Activated CD4-positive, alpha-beta T cell treated with anti-CD3 and anti-CD28 coated beads, Interleukin-2, amount 10 ng/mL, durations not matched to agents 24 days and 14 days (primary cell): ENCODE measurements at regions of chr13 and their contacts with region 1.

Region 1: DNA sequence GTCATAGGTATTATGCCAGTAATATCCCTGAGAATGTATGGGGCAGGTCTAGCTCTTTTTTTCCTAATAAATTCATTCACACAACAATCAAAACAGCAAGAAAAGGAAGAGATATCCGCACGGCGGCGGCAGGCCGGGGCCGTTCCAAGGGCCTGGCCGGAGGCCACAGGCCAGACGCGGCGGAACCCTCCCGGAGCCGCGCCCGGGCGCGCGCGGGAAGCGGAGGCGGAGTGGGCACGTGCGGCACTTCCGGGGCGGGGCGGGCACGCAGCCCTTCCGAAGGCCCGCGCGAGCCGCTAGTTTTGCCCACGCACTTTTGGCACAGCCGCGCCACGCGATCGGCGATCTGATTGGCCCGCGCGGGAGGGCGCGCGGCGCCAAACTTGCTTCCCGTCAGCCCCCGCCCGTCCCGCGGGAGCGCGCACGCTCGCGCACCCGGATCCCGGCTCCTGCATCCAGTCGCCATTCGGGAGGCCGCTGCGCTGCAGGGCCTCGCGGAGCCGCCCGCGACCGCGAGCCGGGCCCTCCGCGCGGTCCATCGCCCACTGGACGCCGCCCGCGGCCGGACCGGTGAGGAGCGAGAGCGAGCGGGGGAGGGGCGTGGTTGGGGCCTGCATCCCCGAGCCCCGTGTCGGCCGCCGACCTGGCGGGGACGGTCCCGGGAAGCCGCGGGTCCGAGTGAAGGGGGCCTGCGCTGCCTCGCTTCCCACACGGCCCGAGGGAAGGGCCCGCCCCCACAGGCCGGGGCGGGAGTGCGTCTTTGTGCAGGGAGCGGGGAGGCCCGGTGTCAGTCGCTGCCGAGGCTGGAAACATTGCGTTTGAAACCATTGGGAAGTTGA is at the start of gene CHAMP1:
- DNase-seq: peak; percentile 98
- H3K4me3 Mint-ChIP-seq: peak within 1 kb of the TSS; percentile 86
- H3K27ac Mint-ChIP-seq: peak within 1 kb of the TSS; percentile 94
- H3K4me1 Mint-ChIP-seq: peaks cover 33% of the 10 kb centered on the region
- H3K27me3 Mint-ChIP-seq: no peaks in the 10 kb centered on the region
- total RNA-seq, gene CHAMP1: 46.9 and 48.2 TPM in 2 replicates

Region 2: DNA sequence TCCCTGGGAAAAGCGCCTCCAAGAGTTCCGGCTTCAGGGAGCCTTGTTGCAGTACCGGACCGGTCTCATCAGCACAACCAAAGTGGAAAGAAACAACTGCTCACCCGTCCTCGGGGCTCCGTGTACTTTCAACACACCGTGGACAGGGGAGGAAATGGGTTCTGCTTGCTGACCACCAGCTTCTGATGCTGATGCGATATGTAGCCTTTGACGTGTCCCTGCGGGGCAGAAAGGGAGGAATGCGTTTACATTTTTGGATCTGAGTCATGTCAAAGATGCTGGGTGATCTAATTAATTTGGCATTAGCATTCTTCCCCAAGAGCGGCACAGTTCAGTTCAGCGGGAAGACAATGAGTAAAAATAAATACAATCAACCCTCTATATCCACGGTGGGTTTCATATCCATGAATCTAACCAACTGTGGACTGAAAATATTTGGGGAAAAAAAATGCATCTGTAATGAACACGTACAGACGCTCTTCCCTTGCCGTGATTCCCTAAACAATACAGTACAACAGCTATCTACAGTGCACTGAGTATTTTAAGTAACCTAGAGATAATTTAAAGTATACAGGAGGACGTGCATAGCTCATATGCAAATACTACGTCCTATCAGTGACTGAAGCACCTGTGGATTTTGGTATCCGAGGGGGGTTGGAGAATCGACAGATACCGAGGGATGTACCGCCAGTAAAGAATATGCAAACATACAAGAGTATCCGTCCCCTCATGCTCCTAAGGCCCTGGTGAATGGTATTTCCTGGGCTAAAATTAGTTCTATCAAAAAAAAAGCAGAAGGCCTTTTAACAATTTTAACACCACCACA is 1136.0 kb before region 1 on chr13:
- intact Hi-C with region 1: no loop called
- DNase-seq: no peak
- H3K4me3 Mint-ChIP-seq: no peak overlapping the region
- H3K27ac Mint-ChIP-seq: no peak overlapping the region
- H3K4me1 Mint-ChIP-seq: peaks cover 29% of the 10 kb centered on the region
- H3K27me3 Mint-ChIP-seq: no peaks in the 10 kb centered on the region

Region 3: DNA sequence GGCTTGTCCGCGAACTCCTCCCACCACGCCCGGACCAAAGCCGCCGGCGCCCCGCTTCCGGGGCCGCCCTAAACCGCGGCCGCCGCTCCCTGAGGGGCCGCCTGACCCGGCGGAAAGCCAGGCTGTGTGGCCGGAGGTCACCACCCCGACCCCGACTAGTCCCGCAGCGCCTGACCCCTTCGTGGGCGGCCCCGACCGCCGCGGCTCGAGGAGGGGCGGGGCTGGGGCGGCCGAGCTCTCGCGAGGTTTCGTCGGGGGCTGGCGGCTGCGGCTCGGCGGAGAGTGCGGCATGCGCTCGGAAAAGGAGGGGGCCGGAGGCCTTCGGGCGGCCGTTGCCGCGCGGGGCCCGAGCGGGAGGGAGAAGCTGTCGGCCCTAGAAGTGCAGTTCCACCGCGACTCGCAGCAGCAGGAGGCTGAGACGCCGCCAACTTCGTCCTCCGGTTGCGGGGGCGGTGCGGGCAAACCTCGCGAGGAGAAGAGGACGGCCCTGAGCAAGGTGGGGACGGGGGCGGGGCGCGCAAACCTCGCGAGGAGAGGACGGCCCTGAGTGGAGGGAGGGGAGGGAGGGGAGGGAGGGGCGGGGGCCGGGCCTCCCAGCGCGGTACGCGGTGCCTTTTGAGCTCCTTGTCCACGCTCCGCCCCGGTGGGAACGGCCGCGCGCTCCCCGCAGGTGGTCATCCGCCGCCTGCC is 32.8 kb before region 1 on chr13 and contains the start of gene UPF3A:
- intact Hi-C with region 1: loop called (anchors 1 kb)
- DNase-seq: peak; percentile 96
- H3K4me3 Mint-ChIP-seq: peak within 1 kb of the TSS; percentile 94
- H3K27ac Mint-ChIP-seq: peak within 1 kb of the TSS; percentile 99
- H3K4me1 Mint-ChIP-seq: peaks cover 40% of the 10 kb centered on the region
- H3K27me3 Mint-ChIP-seq: no peaks in the 10 kb centered on the region
- total RNA-seq, gene UPF3A: 51.4 and 52.1 TPM in 2 replicates